Astrocyte of the spinal cord (primary cell): ENCODE measurements at regions of chr12 and their contacts with region 1.

Region 1: DNA sequence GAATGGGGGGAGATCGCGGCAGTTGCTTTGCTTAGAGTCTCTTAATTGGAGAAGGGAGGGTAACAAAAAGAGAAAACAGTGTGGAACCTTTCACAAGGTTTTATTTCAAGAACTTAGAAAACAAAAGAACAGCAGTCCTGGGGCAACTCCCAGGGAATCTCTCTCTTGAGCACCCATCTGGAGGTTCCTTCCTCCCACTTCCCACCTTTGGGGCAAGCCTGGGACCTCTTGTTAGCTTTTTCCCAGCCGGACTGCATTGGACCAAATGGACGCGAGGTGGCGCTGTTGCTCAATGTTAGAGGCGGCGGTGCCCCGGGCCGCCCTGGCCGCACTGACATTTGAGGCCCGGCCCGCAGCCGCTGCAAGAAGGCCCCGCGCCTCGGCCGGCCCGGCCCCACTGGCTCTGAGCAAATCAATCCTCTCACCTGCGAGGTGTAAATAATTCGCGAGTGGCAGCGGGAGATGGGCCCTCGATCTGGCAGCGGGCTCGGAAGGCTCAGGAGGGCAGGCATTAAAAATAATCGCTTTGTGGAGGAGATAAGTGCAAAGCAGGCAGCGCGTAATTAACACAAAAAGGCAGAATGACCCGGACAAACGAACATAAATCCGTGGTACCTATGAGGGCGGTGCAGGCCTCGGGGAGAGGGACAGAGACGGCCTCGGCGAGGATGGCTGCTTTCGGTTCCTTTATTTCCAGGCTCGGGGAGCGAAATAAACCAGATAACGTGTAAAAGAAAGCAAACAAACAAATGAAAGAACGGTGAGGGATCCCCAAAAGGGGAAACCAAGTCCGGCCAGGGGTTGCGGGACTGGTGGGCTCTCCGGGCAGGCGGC is 2.7 kb upstream of the HOXC8 start:
- DNase-seq: peak; percentile 81
- H3K4me3 ChIP-seq: no peak overlapping the region
- CTCF ChIP-seq: peak; percentile 81

Region 2: GRCh38 chr12:54191550-54192022 is 185.5 kb after region 1 on chr12:
- in situ Hi-C with region 1: loop called (anchors 25 kb)
- DNase-seq: peak; percentile 73
- H3K4me3 ChIP-seq: no peak overlapping the region
- CTCF ChIP-seq: peak; percentile 85